CD8-positive, alpha-beta T cell (primary cell): ENCODE measurements at regions of chr19 and their contacts with region 1.

Region 1: GRCh38 chr19:56333505-56333904 is 18.9 kb upstream of the ZSCAN5A start:
- DNase-seq: peak in 6 of 9 experiments; percentile 9 to 69 (median 42)
- ATAC-seq: peak; percentile 54
- H3K4me3 ChIP-seq: no peak overlapping the region
- H3K4me3 Mint-ChIP-seq: no peak overlapping the region
- H3K27ac ChIP-seq: no peak overlapping the region
- H3K27ac Mint-ChIP-seq: no peak overlapping the region
- H3K4me1 ChIP-seq: no peaks in the 10 kb centered on the region
- H3K4me1 Mint-ChIP-seq: no peaks in the 10 kb centered on the region
- H3K27me3 ChIP-seq: no peaks in the 10 kb centered on the region
- H3K27me3 Mint-ChIP-seq: peaks cover 3% of the 10 kb centered on the region
- CTCF ChIP-seq: peak; percentile 64

Region 2: GRCh38 chr19:56170261-56170660 is 163.2 kb before region 1 on chr19:
- CTCF ChIA-PET with region 1: interaction called, 3 read pairs
- POLR2A ChIA-PET with region 1: no interaction called
- intact Hi-C with region 1: loop called in 1 of 2 experiments (anchors 10 kb)
- DNase-seq: no peak
- ATAC-seq: no peak
- H3K4me3 ChIP-seq: no peak overlapping the region
- H3K4me3 Mint-ChIP-seq: no peak overlapping the region
- H3K27ac ChIP-seq: no peak overlapping the region
- H3K27ac Mint-ChIP-seq: no peak overlapping the region
- H3K4me1 ChIP-seq: no peaks in the 10 kb centered on the region
- H3K4me1 Mint-ChIP-seq: peaks cover 2% of the 10 kb centered on the region
- H3K27me3 ChIP-seq: no peaks in the 10 kb centered on the region
- H3K27me3 Mint-ChIP-seq: peaks cover 8% of the 10 kb centered on the region
- CTCF ChIP-seq: no peak